ENCODE measurements at regions of chr18 and their contacts with region 1.

Region 1: DNA sequence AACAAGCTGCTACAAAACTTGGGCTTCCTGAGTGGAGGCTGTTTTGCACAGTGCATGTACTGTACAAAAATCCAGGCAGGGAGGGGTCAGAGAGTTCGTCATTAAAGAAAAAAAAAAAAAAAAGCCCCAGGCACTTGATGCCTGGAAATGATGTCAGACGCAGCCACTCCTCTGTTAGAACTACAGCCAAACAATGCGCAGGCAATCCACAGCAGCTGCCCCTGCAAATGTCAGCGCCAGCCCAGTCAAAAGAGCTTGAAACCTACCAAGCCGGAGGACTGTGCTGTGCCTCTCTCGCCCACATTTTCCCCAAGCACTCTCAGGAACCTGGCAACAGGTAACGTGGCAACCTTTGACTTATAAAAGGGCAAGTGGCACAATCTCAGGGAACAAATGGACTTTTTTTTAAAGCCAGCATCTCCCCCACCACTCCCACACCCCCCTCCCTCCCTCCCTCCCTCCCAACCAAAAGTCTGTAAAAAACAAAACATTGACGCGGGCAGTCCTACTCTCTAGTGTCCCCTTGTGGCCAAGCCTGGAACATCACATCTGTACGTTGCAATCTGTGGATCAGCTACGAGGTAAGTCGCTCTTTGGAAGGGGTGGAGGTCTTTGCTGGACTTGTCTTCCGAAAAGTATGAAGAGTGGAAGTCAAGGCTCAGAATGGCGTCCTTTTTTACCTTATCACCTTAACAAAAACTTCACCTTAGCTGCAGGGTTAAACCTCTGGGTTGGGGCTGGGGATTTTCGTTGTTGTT is 144.1 kb downstream of the TGIF1 start:
- DNase-seq: peak; percentile 91 to 93
- H3K4me3 ChIP-seq: peak overlapping the region; percentile 69
- H3K27ac ChIP-seq: peak overlapping the region; percentile 100
- H3K4me1 ChIP-seq: peaks cover 77% of the 10 kb centered on the region
- H3K27me3 ChIP-seq: no peaks in the 10 kb centered on the region
- CTCF ChIP-seq: peak; percentile 88

Region 2: GRCh38 chr18:3306391-3306790 is 287.7 kb before region 1 on chr18:
- CTCF ChIA-PET with region 1: no interaction called
- POLR2A ChIA-PET with region 1: interaction called, 11 read pairs
- intact Hi-C with region 1: no loop called
- DNase-seq: no peak
- H3K4me3 ChIP-seq: no peak overlapping the region
- H3K27ac ChIP-seq: no peak overlapping the region
- H3K4me1 ChIP-seq: no peaks in the 10 kb centered on the region
- H3K27me3 ChIP-seq: no peaks in the 10 kb centered on the region
- CTCF ChIP-seq: no peak

Region 3: GRCh38 chr18:3405713-3406112 is 188.4 kb before region 1 on chr18:
- CTCF ChIA-PET with region 1: no interaction called
- POLR2A ChIA-PET with region 1: interaction called, 17 read pairs
- intact Hi-C with region 1: no loop called
- DNase-seq: no peak
- H3K4me3 ChIP-seq: no peak overlapping the region
- H3K27ac ChIP-seq: no peak overlapping the region
- H3K4me1 ChIP-seq: peaks cover 27% of the 10 kb centered on the region
- H3K27me3 ChIP-seq: no peaks in the 10 kb centered on the region
- CTCF ChIP-seq: no peak

Region 4: GRCh38 chr18:3460823-3461398 is 133.2 kb before region 1 on chr18:
- CTCF ChIA-PET with region 1: interaction called, 12 read pairs
- POLR2A ChIA-PET with region 1: interaction called, 22 read pairs
- intact Hi-C with region 1: no loop called
- DNase-seq: no peak
- H3K4me3 ChIP-seq: no peak overlapping the region
- H3K27ac ChIP-seq: peak overlapping the region; percentile 2; the same call in 1 of the 2 replicates
- H3K4me1 ChIP-seq: peaks cover 27% of the 10 kb centered on the region
- H3K27me3 ChIP-seq: no peaks in the 10 kb centered on the region; the same call in 1 of the 2 replicates
- CTCF ChIP-seq: no peak

Region 5: GRCh38 chr18:3604498-3605408 is 10.7 kb after region 1 on chr18:
- CTCF ChIA-PET with region 1: interaction called, 16 read pairs
- POLR2A ChIA-PET with region 1: interaction called, 29 read pairs
- intact Hi-C with region 1: loop called (anchors 1 kb)
- DNase-seq: peak in 1 of 2 experiments; percentile 97
- H3K4me3 ChIP-seq: peak overlapping the region; percentile 72
- H3K27ac ChIP-seq: peak overlapping the region; percentile 100
- H3K4me1 ChIP-seq: peaks cover 32% of the 10 kb centered on the region
- H3K27me3 ChIP-seq: no peaks in the 10 kb centered on the region
- CTCF ChIP-seq: no peak

Region 6: GRCh38 chr18:3794537-3795348 is 200.7 kb after region 1 on chr18:
- CTCF ChIA-PET with region 1: no interaction called
- POLR2A ChIA-PET with region 1: no interaction called
- intact Hi-C with region 1: loop called (anchors 10 kb)
- DNase-seq: peak; percentile 87 to 88
- H3K4me3 ChIP-seq: peak overlapping the region; percentile 20; the same call in 1 of the 2 replicates
- H3K27ac ChIP-seq: peak overlapping the region; percentile 93
- H3K4me1 ChIP-seq: peaks cover 26% of the 10 kb centered on the region
- H3K27me3 ChIP-seq: no peaks in the 10 kb centered on the region
- CTCF ChIP-seq: no peak; the same call in 1 of the 2 replicates